ENCODE measurements at regions of chr9 and their contacts with region 1.

Region 1: DNA sequence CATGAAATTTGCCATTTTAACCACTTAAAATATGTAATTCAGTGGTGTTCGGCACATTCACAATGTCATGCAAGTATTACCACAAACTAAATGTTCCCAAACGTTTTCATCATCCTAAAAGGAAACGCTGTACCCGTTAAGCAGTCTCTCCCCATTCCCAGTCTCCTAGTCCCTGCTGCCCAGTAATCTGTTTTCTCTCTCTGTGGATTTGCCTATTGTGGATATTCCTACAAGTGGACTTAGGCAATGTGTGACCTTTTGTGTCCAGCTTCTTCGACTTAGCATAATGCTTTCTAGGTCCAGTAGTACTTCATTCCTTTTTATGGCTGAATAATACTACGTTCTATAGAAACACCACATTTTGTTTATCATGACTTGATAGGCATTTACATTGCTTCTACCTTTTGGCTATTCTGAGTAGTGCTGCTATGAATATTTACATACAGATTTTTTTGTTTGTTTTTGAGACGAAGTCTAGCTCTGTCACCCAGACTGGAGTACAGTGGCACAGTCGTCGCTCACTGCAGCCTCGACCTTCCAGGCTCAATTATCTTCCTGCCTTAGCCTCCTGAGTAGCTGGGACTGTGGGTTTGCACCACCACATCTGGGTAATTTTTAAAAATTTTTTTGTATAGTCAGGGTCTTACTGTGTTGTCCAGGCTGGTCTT is 13.0 kb downstream of the DENND4C start:
- DNase-seq: no peak
- ATAC-seq: no peak
- H3K4me3 ChIP-seq: no peak overlapping the region
- H3K27ac ChIP-seq: no peak overlapping the region
- H3K4me1 ChIP-seq: no peaks in the 10 kb centered on the region
- H3K27me3 ChIP-seq: no peaks in the 10 kb centered on the region
- CTCF ChIP-seq: no peak

Region 2: GRCh38 chr9:19331877-19332276 is 88.4 kb after region 1 on chr9:
- CTCF ChIA-PET with region 1: interaction called, 14 read pairs
- POLR2A ChIA-PET with region 1: no interaction called
- intact Hi-C with region 1: no loop called
- DNase-seq: peak; percentile 19
- ATAC-seq: peak; percentile 83
- H3K4me3 ChIP-seq: no peak overlapping the region
- H3K27ac ChIP-seq: no peak overlapping the region
- H3K4me1 ChIP-seq: no peaks in the 10 kb centered on the region
- H3K27me3 ChIP-seq: no peaks in the 10 kb centered on the region
- CTCF ChIP-seq: no peak